Caco-2 (cell line): ENCODE measurements at regions of chr18 and their contacts with region 1.

Region 1: GRCh38 chr18:67515945-67516538 is 478 bp downstream of the DSEL start:
- DNase-seq: peak; percentile 69 to 76
- H3K4me3 ChIP-seq: peak overlapping the region; percentile 51
- H3K4me3 Mint-ChIP-seq: peak overlapping the region; percentile 87
- H3K27ac Mint-ChIP-seq: no peak overlapping the region
- H3K4me1 ChIP-seq: no peaks in the 10 kb centered on the region
- H3K4me1 Mint-ChIP-seq: peaks cover 5% of the 10 kb centered on the region
- H3K27me3 ChIP-seq: no peaks in the 10 kb centered on the region
- H3K27me3 Mint-ChIP-seq: no peaks in the 10 kb centered on the region
- CTCF ChIP-seq: peak; percentile 35 to 59

Region 2: DNA sequence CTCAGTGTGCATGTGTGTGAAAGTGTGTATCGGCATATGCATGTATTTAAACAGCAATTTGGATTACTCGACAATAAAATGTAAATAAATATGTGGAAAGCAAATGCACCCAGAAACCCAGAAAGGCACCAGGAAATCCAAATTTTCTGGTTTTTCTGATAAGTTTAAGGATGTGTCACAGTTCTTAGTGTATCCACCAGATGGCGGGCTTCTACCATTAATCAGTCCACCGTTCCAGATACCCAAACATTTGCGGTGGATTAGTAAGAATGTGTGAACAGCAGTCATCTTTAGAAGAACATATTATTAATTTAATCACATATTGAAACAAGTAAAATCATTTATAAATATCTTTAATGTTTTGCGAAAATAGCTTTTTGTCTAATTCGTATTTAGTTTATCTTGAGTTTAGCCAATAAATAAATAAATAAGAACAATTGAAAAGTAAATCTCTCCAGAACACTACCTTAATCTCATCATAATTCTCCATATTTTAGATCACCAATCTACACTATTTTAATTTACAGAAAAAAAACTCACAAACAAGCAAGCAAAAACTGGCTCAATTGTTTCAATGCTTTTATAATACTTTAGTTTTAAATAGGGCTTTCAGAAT is 298.4 kb before region 1 on chr18:
- CTCF ChIA-PET with region 1: no interaction called
- POLR2A ChIA-PET with region 1: no interaction called
- intact Hi-C with region 1: loop called (anchors 1 kb)
- DNase-seq: peak in 1 of 2 experiments; percentile 21
- H3K4me3 ChIP-seq: no peak overlapping the region
- H3K4me3 Mint-ChIP-seq: no peak overlapping the region
- H3K27ac Mint-ChIP-seq: no peak overlapping the region
- H3K4me1 ChIP-seq: no peaks in the 10 kb centered on the region
- H3K4me1 Mint-ChIP-seq: no peaks in the 10 kb centered on the region
- H3K27me3 ChIP-seq: no peaks in the 10 kb centered on the region
- H3K27me3 Mint-ChIP-seq: no peaks in the 10 kb centered on the region
- CTCF ChIP-seq: peak; percentile 37 to 52

Region 3: GRCh38 chr18:67710639-67711038 is 194.6 kb after region 1 on chr18:
- CTCF ChIA-PET with region 1: interaction called, 9 read pairs
- POLR2A ChIA-PET with region 1: no interaction called
- intact Hi-C with region 1: loop called (anchors 1 kb)
- DNase-seq: peak in 1 of 2 experiments; percentile 10
- H3K4me3 ChIP-seq: no peak overlapping the region
- H3K4me3 Mint-ChIP-seq: no peak overlapping the region
- H3K27ac Mint-ChIP-seq: no peak overlapping the region
- H3K4me1 ChIP-seq: no peaks in the 10 kb centered on the region
- H3K4me1 Mint-ChIP-seq: no peaks in the 10 kb centered on the region
- H3K27me3 ChIP-seq: no peaks in the 10 kb centered on the region
- H3K27me3 Mint-ChIP-seq: peaks cover 7% of the 10 kb centered on the region
- CTCF ChIP-seq: peak in 1 of 2 experiments; percentile 12

Region 4: GRCh38 chr18:67845035-67845434 is 329.0 kb after region 1 on chr18:
- CTCF ChIA-PET with region 1: no interaction called
- POLR2A ChIA-PET with region 1: no interaction called
- intact Hi-C with region 1: loop called (anchors 5 kb)
- DNase-seq: no peak
- H3K4me3 ChIP-seq: no peak overlapping the region
- H3K4me3 Mint-ChIP-seq: no peak overlapping the region
- H3K27ac Mint-ChIP-seq: no peak overlapping the region
- H3K4me1 ChIP-seq: no peaks in the 10 kb centered on the region
- H3K4me1 Mint-ChIP-seq: no peaks in the 10 kb centered on the region
- H3K27me3 ChIP-seq: no peaks in the 10 kb centered on the region
- H3K27me3 Mint-ChIP-seq: peaks cover 8% of the 10 kb centered on the region
- CTCF ChIP-seq: no peak

Region 5: DNA sequence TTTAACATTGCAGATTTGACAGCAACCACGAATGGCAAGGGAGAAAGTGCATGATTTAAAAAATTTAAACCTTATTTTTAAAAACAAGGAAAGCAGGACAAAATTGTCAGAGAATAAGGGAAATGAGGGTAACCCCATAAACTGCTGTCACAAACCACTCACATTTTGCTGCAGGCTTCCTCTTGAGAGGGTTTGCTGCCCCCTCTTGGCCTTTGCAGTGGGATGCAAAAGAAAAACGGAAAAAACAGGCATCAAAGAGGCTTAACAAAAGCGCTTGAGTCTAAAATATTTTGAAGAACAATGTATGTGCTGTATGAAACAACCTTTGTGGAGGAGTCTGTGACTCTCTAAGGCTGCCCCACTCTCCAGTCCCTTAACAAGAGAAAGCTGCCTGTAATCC is 1107.3 kb after region 1 on chr18:
- CTCF ChIA-PET with region 1: no interaction called
- POLR2A ChIA-PET with region 1: no interaction called
- intact Hi-C with region 1: loop called (anchors 5 kb)
- DNase-seq: peak in 1 of 2 experiments; percentile 28
- H3K4me3 ChIP-seq: no peak overlapping the region
- H3K4me3 Mint-ChIP-seq: no peak overlapping the region
- H3K27ac Mint-ChIP-seq: no peak overlapping the region
- H3K4me1 ChIP-seq: no peaks in the 10 kb centered on the region
- H3K4me1 Mint-ChIP-seq: no peaks in the 10 kb centered on the region
- H3K27me3 ChIP-seq: no peaks in the 10 kb centered on the region
- H3K27me3 Mint-ChIP-seq: peaks cover 4% of the 10 kb centered on the region
- CTCF ChIP-seq: peak; percentile 41 to 59

Region 6: DNA sequence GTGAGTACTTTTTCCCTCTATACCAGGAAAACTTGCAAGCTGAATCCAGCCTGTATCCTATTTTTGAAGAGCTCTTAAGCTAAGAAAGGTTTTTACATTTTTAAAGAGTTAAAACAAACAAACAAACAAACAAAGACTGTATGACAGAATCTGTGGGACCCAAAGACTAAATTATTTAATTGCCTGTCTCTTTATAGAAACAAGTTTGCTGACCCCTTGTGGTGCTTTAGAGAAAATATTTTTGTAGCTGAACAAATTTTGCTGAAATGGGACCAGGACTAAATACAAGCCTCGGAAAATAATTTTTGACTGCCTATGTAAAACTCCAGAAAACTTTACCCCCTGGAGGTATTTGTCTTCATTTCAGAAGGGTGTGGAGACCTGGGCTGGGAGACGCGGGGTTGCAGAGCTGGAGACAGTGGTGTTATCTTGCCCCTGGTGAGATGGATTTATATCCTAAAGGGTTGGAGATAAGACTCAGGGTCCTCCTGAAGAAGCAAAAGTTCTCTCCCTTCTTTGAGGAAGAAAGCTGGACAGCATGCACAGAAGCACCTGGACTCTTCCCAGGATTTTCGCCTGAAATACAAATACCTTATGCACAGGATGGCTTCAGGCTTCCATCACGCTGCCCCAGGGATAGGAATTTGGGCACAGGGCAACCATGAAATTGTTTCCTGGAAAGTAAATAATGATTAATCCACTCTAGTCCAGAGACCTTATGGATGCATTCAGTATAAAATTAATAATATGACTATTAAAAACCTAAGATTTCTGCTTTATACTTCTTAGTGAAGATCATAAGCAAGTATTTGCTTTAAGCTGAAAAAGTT is 1144.5 kb after region 1 on chr18:
- CTCF ChIA-PET with region 1: no interaction called
- POLR2A ChIA-PET with region 1: no interaction called
- intact Hi-C with region 1: loop called (anchors 1 kb)
- DNase-seq: no peak
- H3K4me3 ChIP-seq: no peak overlapping the region
- H3K4me3 Mint-ChIP-seq: no peak overlapping the region
- H3K27ac Mint-ChIP-seq: no peak overlapping the region
- H3K4me1 ChIP-seq: no peaks in the 10 kb centered on the region
- H3K4me1 Mint-ChIP-seq: no peaks in the 10 kb centered on the region
- H3K27me3 ChIP-seq: no peaks in the 10 kb centered on the region
- H3K27me3 Mint-ChIP-seq: no peaks in the 10 kb centered on the region
- CTCF ChIP-seq: peak in 1 of 2 experiments; percentile 16